ENCODE measurements at regions of chr19 and their contacts with region 1.

Region 1: GRCh38 chr19:34096020-34096915 is 76.0 kb upstream of the LSM14A start:
- DNase-seq: peak; percentile 82

Region 2: GRCh38 chr19:33778089-33778791 is 318.0 kb before region 1 on chr19:
- in situ Hi-C with region 1: loop called (anchors 10 kb)
- DNase-seq: peak; percentile 79

Measured in KBM-7 (cell line).